ENCODE measurements at regions of chr19 and their contacts with region 1.

Region 1: GRCh38 chr19:15629003-15629880 is 11.5 kb upstream of the CYP4F3 start:
- DNase-seq: peak; percentile 40 to 58
- ATAC-seq: peak; percentile 93 to 94
- H3K4me3 ChIP-seq: no peak overlapping the region
- H3K27ac ChIP-seq: no peak overlapping the region
- H3K4me1 ChIP-seq: no peaks in the 10 kb centered on the region
- CTCF ChIP-seq: peak; percentile 73
- EP300 ChIP-seq: no peak
- POLR2A ChIP-seq: no peak
- RAD21 ChIP-seq: peak; percentile 88 to 94

Region 2: GRCh38 chr19:15532779-15533521 is 96.3 kb before region 1 on chr19:
- CTCF ChIA-PET with region 1: no interaction called
- POLR2A ChIA-PET with region 1: no interaction called
- DNase-seq: no peak
- ATAC-seq: peak; percentile 25 to 66; a peak in 2 of 6 replicates
- H3K4me3 ChIP-seq: no peak overlapping the region
- H3K27ac ChIP-seq: no peak overlapping the region
- H3K4me1 ChIP-seq: no peaks in the 10 kb centered on the region
- CTCF ChIP-seq: no peak
- EP300 ChIP-seq: no peak
- POLR2A ChIP-seq: no peak
- RAD21 ChIP-seq: no peak

Region 3: GRCh38 chr19:15644816-15645215 is 15.6 kb after region 1 on chr19:
- CTCF ChIA-PET with region 1: interaction called, 10 read pairs
- POLR2A ChIA-PET with region 1: no interaction called
- DNase-seq: no peak
- ATAC-seq: no peak
- H3K4me3 ChIP-seq: no peak overlapping the region
- H3K27ac ChIP-seq: no peak overlapping the region
- H3K4me1 ChIP-seq: peaks cover 28% of the 10 kb centered on the region
- CTCF ChIP-seq: no peak
- EP300 ChIP-seq: no peak
- POLR2A ChIP-seq: no peak
- RAD21 ChIP-seq: no peak

Measured in A549 (cell line).